Caco-2 (cell line): ENCODE measurements at regions of chr1 and their contacts with region 1.

Region 1: DNA sequence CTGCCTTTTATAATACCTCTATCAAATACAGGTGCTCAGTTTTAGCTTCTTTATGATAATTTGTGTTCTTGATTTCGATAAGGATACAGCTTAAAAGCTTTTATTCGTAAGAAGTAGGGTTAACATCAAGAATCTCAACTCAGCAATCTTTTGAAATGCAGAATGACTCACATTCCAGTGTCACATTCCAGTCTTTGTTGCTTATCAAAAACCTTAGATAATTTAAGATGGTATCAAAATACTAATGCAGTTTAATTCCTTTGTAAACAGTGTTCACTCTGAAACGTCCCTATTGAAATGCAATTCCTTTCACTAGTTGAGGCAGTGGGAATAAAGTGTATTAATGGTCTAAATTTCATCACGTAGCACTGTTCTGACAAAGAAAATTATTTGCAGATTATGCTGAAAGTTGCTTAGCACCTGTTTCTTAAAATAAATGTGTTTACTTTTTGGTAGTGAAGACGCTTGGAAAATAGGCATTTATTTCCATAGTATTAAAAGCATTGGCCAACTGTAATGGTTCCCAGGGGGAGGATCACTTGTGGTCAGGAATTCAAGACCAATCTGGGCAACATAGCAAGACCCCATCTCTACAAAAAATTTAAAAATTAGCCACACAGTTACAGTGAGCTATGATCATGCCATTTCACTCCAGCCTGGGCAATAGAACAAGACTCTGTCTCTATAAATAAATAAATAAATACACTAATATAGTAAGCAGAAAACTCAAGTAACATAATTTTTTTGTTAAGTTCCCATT is 10.1 kb upstream of the CNN3 start:
- DNase-seq: peak in 1 of 2 experiments; percentile 39
- H3K4me3 ChIP-seq: no peak overlapping the region
- H3K4me3 Mint-ChIP-seq: peak overlapping the region; percentile 39
- H3K27ac Mint-ChIP-seq: peak overlapping the region; percentile 92
- H3K4me1 ChIP-seq: peaks cover 42% of the 10 kb centered on the region
- H3K4me1 Mint-ChIP-seq: peaks cover 29% of the 10 kb centered on the region
- H3K27me3 ChIP-seq: no peaks in the 10 kb centered on the region
- H3K27me3 Mint-ChIP-seq: no peaks in the 10 kb centered on the region
- CTCF ChIP-seq: no peak

Region 2: GRCh38 chr1:94949681-94950661 is 12.9 kb after region 1 on chr1:
- CTCF ChIA-PET with region 1: no interaction called
- POLR2A ChIA-PET with region 1: no interaction called
- intact Hi-C with region 1: loop called (anchors 2 kb)
- DNase-seq: peak in 1 of 2 experiments; percentile 43
- H3K4me3 ChIP-seq: no peak overlapping the region
- H3K4me3 Mint-ChIP-seq: no peak overlapping the region
- H3K27ac Mint-ChIP-seq: no peak overlapping the region
- H3K4me1 ChIP-seq: peaks cover 22% of the 10 kb centered on the region
- H3K4me1 Mint-ChIP-seq: peaks cover 24% of the 10 kb centered on the region
- H3K27me3 ChIP-seq: no peaks in the 10 kb centered on the region
- H3K27me3 Mint-ChIP-seq: no peaks in the 10 kb centered on the region
- CTCF ChIP-seq: no peak